Activated CD4-positive, alpha-beta memory T cell treated with anti-CD3 and anti-CD28 coated beads, Interleukin-2, amount 10 ng/mL, durations not matched to agents 7 days and 5 days (primary cell): ENCODE measurements at regions of chr9 and their contacts with region 1.

Region 1: GRCh38 chr9:132768932-132769905 is 99.0 kb downstream of the GTF3C4 start:
- DNase-seq: peak; percentile 71
- H3K4me3 Mint-ChIP-seq: peak overlapping the region; percentile 97
- H3K27ac Mint-ChIP-seq: peak overlapping the region; percentile 93
- H3K4me1 Mint-ChIP-seq: peaks cover 22% of the 10 kb centered on the region
- H3K27me3 Mint-ChIP-seq: peaks cover 9% of the 10 kb centered on the region

Region 2: DNA sequence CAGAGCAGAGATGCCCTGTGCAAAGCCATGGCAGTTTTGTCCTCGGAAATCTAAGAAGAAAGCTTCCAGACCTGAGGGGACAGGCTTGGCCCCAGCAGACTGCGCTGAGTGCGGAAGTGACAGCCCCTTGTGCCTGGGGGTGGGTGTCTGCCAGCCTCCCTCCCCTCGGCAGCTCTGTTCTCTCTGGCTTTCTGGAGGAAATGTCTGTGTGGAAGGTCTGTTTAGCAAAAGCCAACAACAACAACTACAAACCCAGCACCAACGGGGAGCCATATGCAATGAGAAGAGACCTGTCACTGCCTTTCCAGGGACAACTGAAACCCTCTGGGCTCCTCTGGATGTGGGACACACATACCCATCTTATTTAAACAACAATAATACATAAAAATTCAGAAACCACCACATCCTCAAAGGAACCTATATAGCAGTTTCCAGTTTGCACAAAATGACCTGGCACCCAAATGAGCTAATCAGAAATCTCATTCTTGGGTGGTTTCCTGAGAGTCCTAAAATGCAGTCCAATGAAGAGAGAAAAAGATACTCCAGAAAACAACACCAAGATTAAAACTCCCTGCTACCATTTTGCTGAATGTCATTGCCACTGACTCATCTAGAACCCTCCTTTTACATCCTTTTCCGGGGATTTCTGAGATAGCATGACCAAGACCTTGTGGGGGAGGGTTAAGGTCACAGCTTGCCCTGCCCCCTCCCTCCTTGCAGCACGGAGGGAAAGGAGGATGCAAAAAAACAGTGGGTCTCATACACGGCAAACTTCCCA is 11.2 kb after region 1 on chr9:
- CTCF ChIA-PET with region 1: interaction called, 7 read pairs
- POLR2A ChIA-PET with region 1: interaction called, 22 read pairs
- DNase-seq: no peak
- H3K4me3 Mint-ChIP-seq: no peak overlapping the region
- H3K27ac Mint-ChIP-seq: peak overlapping the region; percentile 37
- H3K4me1 Mint-ChIP-seq: peaks cover 16% of the 10 kb centered on the region
- H3K27me3 Mint-ChIP-seq: peaks cover 27% of the 10 kb centered on the region

Region 3: DNA sequence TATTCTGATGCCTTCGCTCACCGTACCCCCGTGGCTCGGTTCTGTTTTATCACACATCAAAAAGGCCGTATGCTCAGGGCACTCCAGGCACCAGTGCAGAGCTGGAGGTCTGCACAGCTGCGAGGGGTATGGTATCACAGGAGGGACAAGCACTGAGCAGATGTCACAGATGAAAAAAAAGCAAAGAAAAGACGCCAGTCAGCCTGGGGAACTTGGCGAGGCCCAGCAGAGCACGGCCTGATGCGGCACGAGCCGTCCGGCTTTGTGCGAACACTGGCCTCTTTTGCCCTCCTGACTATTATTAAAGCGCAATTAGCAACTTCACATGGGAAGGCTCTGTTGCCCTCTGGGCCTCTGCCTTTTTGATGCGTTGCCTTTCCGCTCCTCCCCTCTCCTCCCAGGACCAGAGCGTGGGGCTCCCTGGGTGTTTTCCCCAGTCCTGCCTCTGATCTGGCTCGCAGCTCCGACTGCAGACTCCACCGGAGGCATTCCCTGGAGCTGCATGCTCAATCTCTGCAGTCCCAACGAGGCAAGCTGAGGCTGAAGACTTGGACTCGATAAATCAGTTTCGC is 64.4 kb after region 1 on chr9:
- CTCF ChIA-PET with region 1: no interaction called
- POLR2A ChIA-PET with region 1: no interaction called
- DNase-seq: no peak
- H3K4me3 Mint-ChIP-seq: no peak overlapping the region
- H3K27ac Mint-ChIP-seq: no peak overlapping the region
- H3K4me1 Mint-ChIP-seq: no peaks in the 10 kb centered on the region
- H3K27me3 Mint-ChIP-seq: peaks cover 23% of the 10 kb centered on the region